ENCODE measurements at regions of chr16 and their contacts with region 1.

Region 1: GRCh38 chr16:17277977-17278381 is 192.8 kb downstream of the XYLT1 start:
- DNase-seq: peak; percentile 31
- CTCF ChIP-seq: peak; percentile 71

Region 2: DNA sequence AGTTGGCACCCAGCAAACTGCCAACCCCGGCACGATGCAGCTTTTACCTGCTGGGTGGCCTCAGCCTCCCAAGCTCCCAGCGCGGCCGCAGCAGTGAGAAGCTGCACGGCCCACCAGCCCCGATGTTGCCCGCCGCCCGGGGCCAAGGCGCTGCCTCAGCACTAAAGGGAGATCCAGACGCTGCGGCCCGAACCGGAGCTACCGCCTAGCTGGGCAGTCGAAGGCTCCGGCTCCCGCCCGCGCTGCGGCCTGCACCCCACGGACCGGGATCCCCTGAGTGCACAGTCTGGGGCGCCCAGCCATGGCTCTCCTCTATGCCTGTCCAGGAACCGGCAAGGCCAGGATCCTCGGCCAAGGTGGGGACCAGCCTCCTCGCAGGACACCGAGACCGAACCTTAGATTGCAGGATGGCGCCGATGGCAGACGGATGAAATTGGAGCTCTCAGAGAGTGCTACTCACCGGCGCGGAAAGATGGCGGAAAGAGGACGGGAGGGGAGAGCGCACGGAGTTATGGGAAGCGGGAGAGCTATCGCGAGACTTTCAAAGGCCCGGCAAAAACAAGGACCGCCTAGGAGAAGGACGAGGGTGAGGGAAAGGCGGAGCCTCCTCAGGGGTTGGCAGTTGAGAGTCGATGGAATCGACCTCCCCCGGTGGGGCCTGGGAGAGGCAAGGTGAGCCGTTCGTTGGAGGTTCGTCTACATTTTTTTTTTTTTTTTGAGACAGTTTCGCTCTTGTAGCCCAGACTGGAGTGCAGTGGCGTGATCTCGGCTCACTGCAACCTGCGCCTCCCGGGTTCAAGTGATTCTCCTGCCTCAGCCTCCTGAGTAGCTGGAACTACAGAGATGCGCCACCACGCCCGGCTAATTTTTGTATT is 1512.1 kb after region 1 on chr16 and contains the start of gene RPS15A:
- in situ Hi-C with region 1: loop called (anchors 25 kb)
- DNase-seq: peak; percentile 96
- CTCF ChIP-seq: no peak

Measured in GM13977 (cell line).